Transverse colon (tissue), 4 donors: ENCODE measurements at regions of chr9 and their contacts with region 1.

Region 1: GRCh38 chr9:84668196-84669012 is 1.1 kb upstream of the NTRK2 start:
- DNase-seq: peak; percentile 60
- H3K4me3 ChIP-seq: peak overlapping the region in 3 of 4 donors; percentile 0 to 53 (median 31)
- H3K27ac ChIP-seq: no peak overlapping the region
- H3K4me1 ChIP-seq: peaks cover 11 to 31% (median 20%) of the 10 kb centered on the region in 4 donors
- H3K27me3 ChIP-seq: peaks cover 63% of the 10 kb centered on the region
- CTCF ChIP-seq: peak in 3 of 5 experiments; percentile 29 to 54 (median 31)
- EP300 ChIP-seq: no peak
- POLR2A ChIP-seq: no peak

Region 2: DNA sequence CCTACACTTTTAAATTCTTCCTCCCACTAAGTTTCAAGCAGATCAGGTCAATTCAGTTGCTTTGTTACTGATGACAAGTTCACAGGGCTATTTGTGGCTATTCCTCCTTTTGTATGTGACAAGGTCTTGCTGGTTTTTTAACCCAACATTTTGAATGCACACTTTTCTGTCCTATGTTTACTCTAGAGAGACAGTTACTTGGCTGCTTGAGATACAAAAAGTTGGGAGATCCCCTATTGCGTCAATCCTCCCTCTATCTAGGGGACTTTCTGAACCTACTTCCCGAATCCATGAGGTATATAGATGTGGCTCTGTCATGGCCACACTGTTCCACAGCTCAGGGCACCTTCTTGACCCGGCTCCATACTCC is 387.8 kb after region 1 on chr9:
- in situ Hi-C with region 1: no loop called
- intact Hi-C with region 1: no loop called
- DNase-seq: no peak
- H3K4me3 ChIP-seq: no peak overlapping the region
- H3K27ac ChIP-seq: no peak overlapping the region
- H3K4me1 ChIP-seq: no peaks in the 10 kb centered on the region
- H3K27me3 ChIP-seq: no peaks in the 10 kb centered on the region
- CTCF ChIP-seq: no peak
- EP300 ChIP-seq: no peak
- POLR2A ChIP-seq: no peak

Region 3: GRCh38 chr9:85258823-85259370 is 590.5 kb after region 1 on chr9:
- in situ Hi-C with region 1: loop called in 1 of 4 experiments (anchors 25 kb)
- intact Hi-C with region 1: no loop called
- DNase-seq: peak; percentile 57
- H3K4me3 ChIP-seq: no peak overlapping the region
- H3K27ac ChIP-seq: no peak overlapping the region
- H3K4me1 ChIP-seq: peaks cover 0 to 3% (median 0%) of the 10 kb centered on the region in 4 donors
- H3K27me3 ChIP-seq: no peaks in the 10 kb centered on the region
- CTCF ChIP-seq: peak; percentile 29 to 62 (median 53)
- EP300 ChIP-seq: no peak
- POLR2A ChIP-seq: no peak